PC-3 (cell line): ENCODE measurements at regions of chr2 and their contacts with region 1.

Region 1: DNA sequence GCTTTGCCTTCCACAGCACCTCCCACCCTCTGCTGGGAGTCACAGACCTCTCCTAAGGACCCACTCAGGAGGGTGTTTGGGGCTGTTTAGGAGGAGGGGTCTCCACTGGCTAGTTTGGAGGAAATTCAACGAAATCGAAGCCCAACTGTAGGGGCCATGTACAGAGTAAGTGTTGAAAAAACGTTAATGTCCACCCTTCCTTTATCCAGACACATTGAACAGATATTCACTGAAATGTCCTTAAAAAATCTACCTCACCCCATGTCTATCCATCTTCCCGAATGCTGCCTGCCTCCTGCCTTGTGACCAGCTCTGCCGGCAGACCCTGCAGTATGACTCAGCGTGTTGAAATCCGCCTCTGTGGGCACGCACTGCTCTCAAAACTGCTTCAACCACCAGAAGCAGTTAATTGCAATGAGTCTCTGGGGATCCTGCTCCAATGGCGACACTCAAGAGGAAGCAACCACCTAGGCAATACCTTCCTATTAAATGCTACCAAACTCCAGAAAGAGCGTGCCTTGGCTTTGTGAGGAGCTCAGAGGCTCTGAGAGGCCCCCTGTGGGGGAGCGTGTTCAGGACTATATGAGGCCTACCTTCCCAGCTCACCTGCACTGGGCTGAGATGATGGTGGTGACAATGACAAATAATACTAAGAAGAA is 61.4 kb upstream of the RTN4 start:
- DNase-seq: peak; percentile 89
- ATAC-seq: peak; percentile 73
- H3K4me3 ChIP-seq: no peak overlapping the region
- H3K27ac ChIP-seq: peak overlapping the region; percentile 47
- H3K4me1 ChIP-seq: peaks cover 65% of the 10 kb centered on the region
- H3K27me3 ChIP-seq: no peaks in the 10 kb centered on the region
- CTCF ChIP-seq: no peak

Region 2: DNA sequence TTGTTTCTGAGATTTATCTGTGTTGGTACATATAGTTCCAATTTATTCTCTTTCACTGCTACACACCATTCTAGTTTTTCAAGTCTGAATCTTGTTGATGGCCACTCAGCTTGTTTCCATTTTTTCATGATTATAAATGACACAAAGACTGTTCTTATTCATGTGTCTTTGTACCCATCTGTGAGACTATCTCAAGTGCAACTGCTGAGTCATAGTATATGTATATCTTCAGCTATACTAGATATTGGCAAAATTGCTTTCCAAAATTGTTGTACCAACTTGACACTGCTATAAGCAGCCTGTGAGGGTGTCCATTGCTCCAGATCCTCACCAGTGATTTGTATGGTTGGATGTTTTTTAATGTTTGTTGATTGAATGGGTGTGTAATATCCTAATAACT is 24.2 kb before region 1 on chr2:
- CTCF ChIA-PET with region 1: no interaction called
- POLR2A ChIA-PET with region 1: no interaction called
- intact Hi-C with region 1: no loop called
- DNase-seq: no peak
- ATAC-seq: no peak; the same call in 1 of the 2 replicates
- H3K4me3 ChIP-seq: no peak overlapping the region
- H3K27ac ChIP-seq: no peak overlapping the region
- H3K4me1 ChIP-seq: 0 out of 2 replicates have a peak, but pooled peaks cover 7% of the 10 kb centered on the region
- H3K27me3 ChIP-seq: no peaks in the 10 kb centered on the region
- CTCF ChIP-seq: no peak

Region 3: GRCh38 chr2:55159037-55159651 is 47.4 kb after region 1 on chr2:
- CTCF ChIA-PET with region 1: no interaction called
- POLR2A ChIA-PET with region 1: no interaction called
- intact Hi-C with region 1: loop called (anchors 5 kb)
- DNase-seq: no peak
- ATAC-seq: no peak
- H3K4me3 ChIP-seq: no peak overlapping the region
- H3K27ac ChIP-seq: no peak overlapping the region
- H3K4me1 ChIP-seq: peaks cover 55% of the 10 kb centered on the region
- H3K27me3 ChIP-seq: no peaks in the 10 kb centered on the region
- CTCF ChIP-seq: no peak